ENCODE measurements at regions of chrX and their contacts with region 1.

Region 1: GRCh38 chrX:54891573-54891972 is 29.1 kb upstream of the TRO start:
- DNase-seq: peak in 5 of 7 donors; percentile 19 to 53 (median 31)
- H3K4me3 ChIP-seq: no peak overlapping the region
- H3K27ac ChIP-seq: no peak overlapping the region
- H3K4me1 ChIP-seq: no peaks in the 10 kb centered on the region
- H3K27me3 ChIP-seq: peaks cover 14% of the 10 kb centered on the region
- CTCF ChIP-seq: peak; percentile 24 to 48 (median 44)
- POLR2A ChIP-seq: no peak

Region 2: GRCh38 chrX:55057675-55058249 is 166.2 kb after region 1 on chrX:
- intact Hi-C with region 1: loop called in 1 of 2 experiments (anchors 5 kb)
- DNase-seq: peak in 5 of 7 donors; percentile 18 to 59 (median 27)
- H3K4me3 ChIP-seq: peak overlapping the region in 1 of 4 donors; percentile 33
- H3K27ac ChIP-seq: no peak overlapping the region
- H3K4me1 ChIP-seq: no peaks in the 10 kb centered on the region
- H3K27me3 ChIP-seq: peaks cover 5% of the 10 kb centered on the region
- CTCF ChIP-seq: peak; percentile 69 to 81 (median 72)
- POLR2A ChIP-seq: no peak

Measured in adrenal gland (tissue), 19 donors.